SK-N-SH (cell line): ENCODE measurements at regions of chr4 and their contacts with region 1.

Region 1: GRCh38 chr4:26410385-26411293 is 79.6 kb downstream of the CCKAR start:
- DNase-seq: peak; percentile 40
- H3K4me3 ChIP-seq: no peak overlapping the region
- H3K27ac ChIP-seq: no peak overlapping the region
- H3K4me1 ChIP-seq: no peaks in the 10 kb centered on the region
- H3K27me3 ChIP-seq: no peaks in the 10 kb centered on the region
- CTCF ChIP-seq: peak; percentile 80
- EP300 ChIP-seq: no peak
- RAD21 ChIP-seq: peak; percentile 86

Region 2: DNA sequence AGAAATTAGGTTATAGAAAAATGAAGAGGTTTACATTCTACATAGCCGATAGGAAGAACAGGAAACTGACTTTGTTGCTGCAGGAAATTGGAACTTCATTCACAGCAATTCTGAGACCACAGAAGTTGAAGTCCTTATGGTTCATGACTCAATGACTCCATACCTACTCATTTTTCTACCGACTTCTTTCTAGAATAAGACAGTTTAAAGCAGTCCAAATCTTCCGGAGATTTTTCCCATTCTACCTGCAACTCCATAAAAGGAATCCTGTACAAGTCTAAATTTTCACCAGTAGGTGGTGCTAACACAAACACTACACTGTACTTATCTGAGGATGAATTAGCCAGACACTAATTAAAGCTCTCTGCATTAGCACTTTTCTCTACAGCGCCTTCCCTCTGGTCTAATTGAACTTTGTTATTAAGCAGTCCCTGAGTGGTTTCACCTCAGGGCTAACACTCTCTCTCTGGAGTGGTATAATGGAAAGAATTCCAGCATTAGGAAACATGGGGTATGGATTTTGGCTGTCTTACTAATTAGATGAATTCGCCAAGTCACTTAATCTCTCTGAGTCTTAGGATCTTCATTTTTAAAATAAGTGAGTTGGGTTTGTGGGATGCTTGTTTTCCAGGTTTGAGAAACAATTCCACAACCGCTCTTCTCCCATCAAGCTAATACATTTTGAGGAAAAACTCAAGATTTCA is 328.7 kb before region 1 on chr4:
- CTCF ChIA-PET with region 1: interaction called, 10 read pairs
- POLR2A ChIA-PET with region 1: no interaction called
- DNase-seq: no peak
- H3K4me3 ChIP-seq: no peak overlapping the region; a peak in 1 of 4 replicates
- H3K27ac ChIP-seq: no peak overlapping the region
- H3K4me1 ChIP-seq: peaks cover 0 to 27% of the 10 kb centered on the region in 2 experiments; a peak in 2 of 4 replicates
- H3K27me3 ChIP-seq: peaks cover 39% of the 10 kb centered on the region
- CTCF ChIP-seq: peak; percentile 80
- EP300 ChIP-seq: no peak
- RAD21 ChIP-seq: peak; percentile 63

Region 3: DNA sequence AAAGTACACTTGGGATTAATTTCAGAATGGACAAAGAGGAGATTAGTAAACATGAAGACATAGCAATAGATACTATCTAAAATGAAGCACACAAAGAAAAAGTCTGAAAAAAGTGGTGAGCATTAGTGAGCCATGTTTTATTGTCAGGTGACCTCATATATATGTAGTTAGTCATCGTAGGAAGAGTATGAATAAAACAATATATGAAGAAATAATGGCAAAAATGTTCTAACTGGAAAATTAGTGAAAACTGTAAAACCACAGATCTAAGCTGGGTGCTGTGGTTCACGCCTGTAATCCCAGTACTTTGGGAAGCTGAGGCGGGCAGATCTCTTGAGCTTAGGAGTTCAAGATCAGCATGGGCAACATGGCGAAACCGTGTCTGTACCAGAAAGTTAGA is 22.0 kb before region 1 on chr4:
- CTCF ChIA-PET with region 1: interaction called, 11 read pairs
- POLR2A ChIA-PET with region 1: no interaction called
- DNase-seq: no peak
- H3K4me3 ChIP-seq: no peak overlapping the region
- H3K27ac ChIP-seq: no peak overlapping the region
- H3K4me1 ChIP-seq: no peaks in the 10 kb centered on the region
- H3K27me3 ChIP-seq: no peaks in the 10 kb centered on the region
- CTCF ChIP-seq: no peak
- EP300 ChIP-seq: no peak
- RAD21 ChIP-seq: no peak

Region 4: DNA sequence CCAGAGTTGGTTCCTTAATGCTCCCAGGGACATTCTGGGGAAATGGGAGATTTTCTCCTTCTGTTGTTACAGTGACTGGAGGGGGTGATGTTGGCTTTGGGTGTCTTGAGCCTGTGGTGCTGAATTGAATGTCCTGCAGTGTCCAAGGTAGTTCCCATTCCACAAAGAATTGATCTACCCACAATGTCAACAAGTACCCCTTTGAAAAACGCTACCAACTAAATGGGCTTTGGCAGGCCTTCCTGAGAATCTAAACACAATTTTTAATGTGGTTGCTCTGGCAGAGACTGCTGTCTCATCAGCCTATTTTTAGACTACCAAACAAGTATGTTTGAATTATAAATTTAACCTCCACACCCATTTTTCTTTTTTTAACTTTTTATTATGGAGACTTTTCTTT is 10.3 kb after region 1 on chr4:
- CTCF ChIA-PET with region 1: interaction called, 12 read pairs
- POLR2A ChIA-PET with region 1: no interaction called
- DNase-seq: no peak
- H3K4me3 ChIP-seq: no peak overlapping the region
- H3K27ac ChIP-seq: no peak overlapping the region; a peak in 1 of 4 replicates
- H3K4me1 ChIP-seq: peaks cover 0 to 11% of the 10 kb centered on the region in 2 experiments; a peak in 1 of 4 replicates
- H3K27me3 ChIP-seq: no peaks in the 10 kb centered on the region
- CTCF ChIP-seq: no peak
- EP300 ChIP-seq: no peak
- RAD21 ChIP-seq: no peak

Region 5: GRCh38 chr4:26447378-26447777 is 36.7 kb after region 1 on chr4:
- CTCF ChIA-PET with region 1: no interaction called
- POLR2A ChIA-PET with region 1: no interaction called
- DNase-seq: no peak
- H3K4me3 ChIP-seq: no peak overlapping the region
- H3K27ac ChIP-seq: no peak overlapping the region
- H3K4me1 ChIP-seq: peaks cover 0 to 4% of the 10 kb centered on the region in 2 experiments; a peak in 1 of 4 replicates
- H3K27me3 ChIP-seq: no peaks in the 10 kb centered on the region
- CTCF ChIP-seq: no peak
- EP300 ChIP-seq: no peak
- RAD21 ChIP-seq: no peak